A673 (cell line): ENCODE measurements at regions of chr2 and their contacts with region 1.

Region 1: DNA sequence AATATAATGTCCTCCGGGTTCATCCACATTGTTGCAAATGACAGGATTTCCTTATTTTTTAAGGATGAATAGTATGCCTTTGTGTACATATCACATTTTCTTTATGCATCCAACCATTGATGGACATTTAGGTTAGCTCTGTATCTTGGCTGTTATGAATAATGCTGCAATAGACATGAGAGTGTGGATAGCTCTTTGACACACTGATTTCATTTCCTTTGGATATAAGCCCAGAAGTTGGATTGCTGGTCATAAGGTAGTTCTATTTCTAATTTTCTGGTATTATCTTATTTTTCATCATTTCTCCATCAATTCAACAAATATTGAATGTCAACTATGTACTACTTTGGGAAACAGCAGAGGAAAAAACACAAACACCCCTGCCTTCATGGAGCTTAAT is 423.3 kb downstream of the MTX2 start:
- DNase-seq: no peak
- H3K4me3 ChIP-seq: no peak overlapping the region
- H3K27ac ChIP-seq: peak overlapping the region; percentile 41
- H3K4me1 ChIP-seq: peaks cover 81% of the 10 kb centered on the region
- H3K27me3 ChIP-seq: no peaks in the 10 kb centered on the region
- CTCF ChIP-seq: no peak

Region 2: DNA sequence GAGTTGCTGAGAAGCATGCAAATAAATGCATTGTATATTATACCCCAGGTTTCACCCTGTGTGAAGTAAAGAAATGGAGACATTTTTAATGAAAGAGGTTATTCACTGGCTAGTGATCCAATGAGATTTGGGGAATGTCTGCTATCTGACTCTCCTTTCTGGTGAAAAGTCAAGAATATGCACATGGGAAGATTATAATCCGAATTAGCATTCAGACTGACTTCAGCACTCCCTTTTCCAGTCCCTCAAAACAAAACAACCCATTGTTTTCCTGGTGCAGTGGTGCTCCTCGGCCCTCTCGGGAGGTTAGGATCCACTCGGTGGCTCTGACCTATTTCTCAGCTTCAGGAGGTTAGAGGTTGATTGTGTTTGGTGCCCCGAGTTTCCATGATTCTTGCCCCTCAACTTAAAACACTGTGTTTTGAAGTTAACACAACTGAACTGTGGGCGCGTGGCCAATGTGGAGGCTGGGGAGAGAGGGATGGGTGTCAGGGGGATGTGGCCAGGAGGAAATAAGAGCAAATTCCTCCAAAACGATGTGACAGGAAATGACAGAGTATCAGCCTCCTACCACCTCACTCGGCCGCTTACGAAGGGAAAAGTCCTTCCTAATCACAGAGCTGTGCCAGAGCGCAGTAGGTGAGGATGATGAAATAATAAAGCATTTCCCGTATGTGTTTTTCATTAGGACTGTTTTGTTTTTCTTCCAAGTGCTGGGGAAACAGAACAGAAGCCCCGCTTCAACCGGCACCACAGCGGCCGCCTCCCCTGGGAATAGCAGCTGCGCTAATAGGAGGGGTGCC is 16.8 kb after region 1 on chr2:
- CTCF ChIA-PET with region 1: no interaction called
- POLR2A ChIA-PET with region 1: no interaction called
- intact Hi-C with region 1: loop called (anchors 1 kb)
- DNase-seq: peak; percentile 98
- H3K4me3 ChIP-seq: peak overlapping the region; percentile 3
- H3K27ac ChIP-seq: peak overlapping the region; percentile 97
- H3K4me1 ChIP-seq: peaks cover 68% of the 10 kb centered on the region
- H3K27me3 ChIP-seq: no peaks in the 10 kb centered on the region
- CTCF ChIP-seq: no peak

Region 3: GRCh38 chr2:176725873-176726645 is 33.5 kb after region 1 on chr2:
- CTCF ChIA-PET with region 1: no interaction called
- POLR2A ChIA-PET with region 1: no interaction called
- intact Hi-C with region 1: no loop called
- DNase-seq: no peak
- H3K4me3 ChIP-seq: no peak overlapping the region
- H3K27ac ChIP-seq: no peak overlapping the region
- H3K4me1 ChIP-seq: peaks cover 6% of the 10 kb centered on the region
- H3K27me3 ChIP-seq: no peaks in the 10 kb centered on the region
- CTCF ChIP-seq: no peak